MCF 10A (cell line): ENCODE measurements at regions of chr3 and their contacts with region 1.

Region 1: DNA sequence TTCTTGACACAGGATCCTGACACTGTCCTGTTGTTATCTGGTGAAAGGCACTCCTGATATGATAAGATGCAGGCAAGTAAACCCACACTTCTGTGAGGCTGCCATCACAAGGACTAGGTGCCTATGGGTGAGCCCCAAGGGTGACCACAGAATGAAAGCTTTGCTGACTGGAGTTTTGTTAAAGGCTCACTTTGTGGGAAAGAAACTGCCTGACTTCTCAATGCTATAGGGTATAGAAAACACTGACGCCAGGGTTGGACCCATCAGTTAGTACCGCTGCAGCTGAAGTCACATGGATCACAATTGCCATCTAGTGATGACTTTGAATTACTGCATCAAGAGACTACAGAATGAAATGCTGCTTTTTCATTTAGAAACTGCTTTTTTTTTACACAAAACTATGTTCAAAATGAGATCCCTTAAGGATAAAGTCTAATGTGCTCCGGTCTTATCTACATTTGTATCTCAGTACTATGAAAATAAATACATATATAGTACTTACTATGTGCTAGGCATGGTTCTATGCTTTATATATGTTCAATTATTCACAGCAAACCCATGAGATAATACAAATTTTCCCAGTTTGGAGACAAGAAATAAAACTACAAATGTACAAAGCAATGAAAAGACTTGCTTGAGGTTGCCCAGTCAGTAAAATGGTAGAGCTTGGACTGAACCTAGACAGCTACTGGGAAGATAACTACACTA is 64.2 kb upstream of the CMSS1 start:
- DNase-seq: peak; percentile 71
- H3K4me3 Mint-ChIP-seq: no peak overlapping the region
- H3K27ac Mint-ChIP-seq: no peak overlapping the region
- H3K4me1 Mint-ChIP-seq: peaks cover 17% of the 10 kb centered on the region
- H3K27me3 Mint-ChIP-seq: no peaks in the 10 kb centered on the region
- CTCF ChIP-seq: peak; percentile 74

Region 2: DNA sequence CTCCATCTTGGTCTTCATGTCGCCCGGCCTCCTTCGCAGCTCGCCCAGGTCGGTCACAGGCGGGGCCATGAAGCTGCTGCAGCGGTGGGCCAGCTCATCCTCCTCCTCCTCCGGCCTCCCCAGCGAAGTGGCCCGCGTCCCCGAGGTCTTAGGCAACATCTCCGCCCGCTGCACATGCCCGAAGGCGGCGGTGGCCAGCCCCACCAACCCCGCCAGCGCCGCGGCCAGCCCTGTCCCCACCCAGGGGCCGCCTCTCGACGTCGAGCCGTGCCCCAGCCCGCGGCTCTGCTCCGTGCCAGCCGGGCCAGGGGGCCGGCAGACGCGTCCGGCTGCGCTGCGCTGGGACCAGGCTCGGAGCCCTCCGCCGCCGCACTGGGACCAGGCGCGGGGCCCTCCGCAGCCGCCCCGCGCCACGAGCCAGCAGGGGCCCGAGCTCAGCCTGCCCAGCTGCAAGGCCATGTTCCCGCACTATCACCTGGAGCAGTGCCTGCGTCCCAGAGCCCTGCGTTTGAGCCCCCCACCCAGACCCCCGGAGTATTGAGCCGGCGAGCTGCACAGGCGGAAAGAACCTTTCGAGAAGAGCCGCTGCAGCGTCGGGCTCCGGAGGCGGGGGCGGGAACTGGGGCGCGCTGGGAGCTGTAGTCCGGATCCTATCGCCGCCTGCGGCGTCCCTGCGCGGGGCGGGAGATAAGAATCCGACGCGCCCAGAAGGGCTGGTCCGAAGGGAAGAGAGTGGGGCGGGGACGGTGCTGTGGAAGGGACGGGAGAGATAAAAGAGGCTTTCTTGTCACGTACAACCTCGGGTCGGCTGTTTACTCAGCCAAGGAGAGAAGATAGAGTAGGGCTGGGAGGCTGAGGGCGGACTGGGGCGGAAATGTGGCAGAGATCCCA is 1160.1 kb before region 1 on chr3 and contains the start of gene CPOX:
- CTCF ChIA-PET with region 1: interaction called, 3 read pairs
- POLR2A ChIA-PET with region 1: no interaction called
- intact Hi-C with region 1: loop called (anchors 10 kb)
- DNase-seq: peak; percentile 86
- H3K4me3 Mint-ChIP-seq: peak within 1 kb of the TSS; percentile 84
- H3K27ac Mint-ChIP-seq: peak within 1 kb of the TSS; percentile 33
- H3K4me1 Mint-ChIP-seq: peaks cover 18% of the 10 kb centered on the region
- H3K27me3 Mint-ChIP-seq: no peaks in the 10 kb centered on the region
- CTCF ChIP-seq: no peak
- total RNA-seq, gene CPOX: 10.8 and 11.2 TPM in 2 replicates

Region 3: DNA sequence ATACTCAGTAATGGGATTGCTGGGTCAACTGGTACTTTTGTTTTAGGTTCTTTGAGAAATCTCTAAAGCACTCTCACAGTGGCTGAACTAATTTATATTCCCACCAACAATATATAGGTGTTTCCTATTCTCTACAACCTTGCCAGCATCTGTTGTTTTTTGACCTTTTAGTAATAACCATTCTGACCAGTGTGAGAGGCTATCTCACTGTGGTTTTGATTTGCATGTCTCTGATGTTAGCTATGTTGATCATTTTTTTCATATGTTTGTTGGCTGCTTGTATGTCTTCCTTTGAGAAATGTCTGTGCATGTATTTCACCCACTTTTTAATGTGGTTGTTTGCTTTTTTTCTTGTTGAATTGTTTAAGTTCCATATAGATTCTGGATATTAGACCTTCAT is 753.7 kb before region 1 on chr3:
- CTCF ChIA-PET with region 1: interaction called, 8 read pairs
- POLR2A ChIA-PET with region 1: no interaction called
- intact Hi-C with region 1: loop called (anchors 5 kb)
- DNase-seq: no peak
- H3K4me3 Mint-ChIP-seq: no peak overlapping the region
- H3K27ac Mint-ChIP-seq: no peak overlapping the region
- H3K4me1 Mint-ChIP-seq: no peaks in the 10 kb centered on the region
- H3K27me3 Mint-ChIP-seq: no peaks in the 10 kb centered on the region
- CTCF ChIP-seq: no peak

Region 4: GRCh38 chr3:99023590-99024192 is 729.7 kb before region 1 on chr3:
- CTCF ChIA-PET with region 1: interaction called, 35 read pairs
- POLR2A ChIA-PET with region 1: interaction called, 5 read pairs
- intact Hi-C with region 1: loop called (anchors 1 kb)
- DNase-seq: peak; percentile 55
- H3K4me3 Mint-ChIP-seq: no peak overlapping the region
- H3K27ac Mint-ChIP-seq: no peak overlapping the region
- H3K4me1 Mint-ChIP-seq: no peaks in the 10 kb centered on the region
- H3K27me3 Mint-ChIP-seq: no peaks in the 10 kb centered on the region
- CTCF ChIP-seq: peak; percentile 62

Region 5: GRCh38 chr3:99172736-99173657 is 580.4 kb before region 1 on chr3:
- CTCF ChIA-PET with region 1: interaction called, 18 read pairs
- POLR2A ChIA-PET with region 1: interaction called, 5 read pairs
- intact Hi-C with region 1: loop called (anchors 1 kb)
- DNase-seq: peak; percentile 80
- H3K4me3 Mint-ChIP-seq: no peak overlapping the region
- H3K27ac Mint-ChIP-seq: no peak overlapping the region
- H3K4me1 Mint-ChIP-seq: no peaks in the 10 kb centered on the region
- H3K27me3 Mint-ChIP-seq: no peaks in the 10 kb centered on the region
- CTCF ChIP-seq: peak; percentile 46

Region 6: GRCh38 chr3:99505646-99506269 is 247.7 kb before region 1 on chr3:
- CTCF ChIA-PET with region 1: interaction called, 42 read pairs
- POLR2A ChIA-PET with region 1: no interaction called
- intact Hi-C with region 1: no loop called
- DNase-seq: peak; percentile 93
- H3K4me3 Mint-ChIP-seq: no peak overlapping the region
- H3K27ac Mint-ChIP-seq: peak overlapping the region; percentile 47
- H3K4me1 Mint-ChIP-seq: peaks cover 28% of the 10 kb centered on the region
- H3K27me3 Mint-ChIP-seq: no peaks in the 10 kb centered on the region
- CTCF ChIP-seq: no peak

Region 7: DNA sequence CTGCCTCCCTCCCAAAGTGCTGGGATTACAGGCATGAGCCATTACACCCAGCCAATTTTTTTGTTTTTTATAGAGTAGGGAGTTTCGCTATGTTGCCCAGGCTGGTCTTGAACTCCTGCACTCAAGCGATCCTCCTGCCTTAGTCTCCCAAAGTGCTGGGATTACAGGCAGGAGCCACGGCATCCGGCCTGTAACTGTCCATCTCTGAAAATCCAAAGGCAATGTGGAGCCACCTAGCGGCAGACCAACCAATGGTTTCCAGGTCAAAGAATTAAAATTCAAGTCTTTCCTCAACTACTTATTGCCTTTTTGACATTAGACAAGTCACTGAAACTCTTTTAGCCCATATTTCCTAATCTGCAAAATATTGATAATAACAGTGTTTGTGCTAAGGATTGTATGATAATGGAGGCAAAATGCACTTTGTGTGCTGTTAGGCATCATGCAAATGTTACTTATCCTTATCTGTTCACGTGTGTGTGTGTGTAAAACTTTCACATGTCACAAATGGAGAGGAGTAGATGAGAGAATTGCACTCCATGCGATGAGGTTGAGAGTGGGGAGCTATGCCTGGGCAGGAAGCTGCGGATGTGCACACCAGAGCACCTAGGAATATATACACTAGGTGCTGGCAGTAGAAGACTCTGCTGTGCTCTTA is 66.3 kb before region 1 on chr3:
- CTCF ChIA-PET with region 1: interaction called, 38 read pairs
- POLR2A ChIA-PET with region 1: no interaction called
- intact Hi-C with region 1: loop called (anchors 1 kb)
- DNase-seq: peak; percentile 76
- H3K4me3 Mint-ChIP-seq: no peak overlapping the region
- H3K27ac Mint-ChIP-seq: peak overlapping the region; percentile 71
- H3K4me1 Mint-ChIP-seq: peaks cover 15% of the 10 kb centered on the region
- H3K27me3 Mint-ChIP-seq: no peaks in the 10 kb centered on the region
- CTCF ChIP-seq: peak; percentile 69